Dendritic cell treated with granulocyte-macrophage colony-stimulating factor and Interleukin-4, amounts not matched to agents 40 ng/mL and 50 ng/mL, for 4 days (primary cell): ENCODE measurements at regions of chrX and their contacts with region 1.

Region 1: GRCh38 chrX:136759968-136760367 is 20.8 kb downstream of the ARHGEF6 start:
- H3K4me3 Mint-ChIP-seq: no peak overlapping the region
- H3K27ac Mint-ChIP-seq: peak overlapping the region; percentile 69
- H3K4me1 Mint-ChIP-seq: peaks cover 21% of the 10 kb centered on the region
- H3K27me3 Mint-ChIP-seq: no peaks in the 10 kb centered on the region

Region 2: DNA sequence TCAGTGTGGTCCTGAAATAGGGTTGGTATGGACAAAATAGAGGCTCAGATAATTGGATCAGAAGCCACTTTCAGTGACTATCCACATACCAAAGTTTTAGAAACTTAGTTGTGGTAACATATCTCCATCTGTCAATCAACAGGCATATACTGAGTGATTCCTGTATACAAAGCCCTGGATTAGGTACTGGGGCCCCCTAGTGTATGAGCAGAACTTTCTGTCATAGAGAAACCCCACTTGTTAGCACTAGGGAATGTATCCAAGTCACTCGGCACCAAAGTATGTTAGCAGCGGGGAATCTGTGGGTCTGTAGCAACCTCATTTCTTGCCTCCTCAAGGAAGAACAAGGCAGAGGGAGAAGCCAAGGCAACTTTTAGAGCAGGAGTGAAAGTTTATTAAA is 559.5 kb before region 1 on chrX:
- intact Hi-C with region 1: no loop called
- H3K4me3 Mint-ChIP-seq: no peak overlapping the region
- H3K27ac Mint-ChIP-seq: no peak overlapping the region
- H3K4me1 Mint-ChIP-seq: no peaks in the 10 kb centered on the region
- H3K27me3 Mint-ChIP-seq: no peaks in the 10 kb centered on the region

Region 3: GRCh38 chrX:136745215-136746173 is 14.5 kb before region 1 on chrX:
- intact Hi-C with region 1: loop called (anchors 2 kb)
- H3K4me3 Mint-ChIP-seq: no peak overlapping the region
- H3K27ac Mint-ChIP-seq: peak overlapping the region; percentile 66
- H3K4me1 Mint-ChIP-seq: peaks cover 36% of the 10 kb centered on the region
- H3K27me3 Mint-ChIP-seq: no peaks in the 10 kb centered on the region

Region 4: GRCh38 chrX:136780763-136781162 is 20.8 kb after region 1 on chrX and contains the start of gene ARHGEF6:
- intact Hi-C with region 1: no loop called
- H3K4me3 Mint-ChIP-seq: peak within 1 kb of the TSS; percentile 71
- H3K27ac Mint-ChIP-seq: peak within 1 kb of the TSS; percentile 92
- H3K4me1 Mint-ChIP-seq: peaks cover 51% of the 10 kb centered on the region
- H3K27me3 Mint-ChIP-seq: no peaks in the 10 kb centered on the region

Region 5: DNA sequence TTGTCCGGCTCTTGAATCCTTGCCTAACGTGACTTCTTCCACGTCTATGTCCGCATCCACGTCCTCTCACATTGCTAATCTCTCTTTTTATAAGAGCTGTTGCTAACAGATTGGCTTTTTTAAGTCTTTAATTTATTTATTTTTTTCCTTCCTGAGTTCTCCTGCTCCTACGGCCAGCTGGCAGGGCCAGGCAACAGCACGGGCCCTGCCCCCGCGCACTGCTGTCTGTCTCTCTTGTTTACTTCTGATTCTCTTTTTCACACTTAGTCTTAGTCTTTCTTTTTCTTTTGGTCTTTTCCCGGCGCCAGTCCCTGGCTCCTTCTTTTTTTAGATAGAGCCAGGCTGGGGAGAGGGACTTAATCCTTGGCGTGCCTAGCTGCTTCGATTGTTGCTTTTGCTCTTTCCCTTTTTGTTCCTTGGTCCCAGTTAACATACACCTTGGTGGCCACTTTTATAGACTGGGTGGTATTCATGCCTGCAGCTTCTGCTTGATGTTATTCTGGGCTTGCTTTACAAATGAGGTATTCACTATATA is 173.7 kb after region 1 on chrX:
- intact Hi-C with region 1: no loop called
- H3K4me3 Mint-ChIP-seq: no peak overlapping the region
- H3K27ac Mint-ChIP-seq: no peak overlapping the region
- H3K4me1 Mint-ChIP-seq: no peaks in the 10 kb centered on the region
- H3K27me3 Mint-ChIP-seq: no peaks in the 10 kb centered on the region